ENCODE measurements at regions of chr2 and their contacts with region 1.

Region 1: GRCh38 chr2:191691016-191691735 is 13.2 kb downstream of the NABP1 start:
- DNase-seq: peak; percentile 87
- ATAC-seq: peak; percentile 30
- H3K4me3 ChIP-seq: no peak overlapping the region
- H3K27ac ChIP-seq: no peak overlapping the region
- H3K4me1 ChIP-seq: peaks cover 16% of the 10 kb centered on the region
- H3K27me3 ChIP-seq: no peaks in the 10 kb centered on the region
- CTCF ChIP-seq: peak; percentile 80
- POLR2A ChIP-seq: no peak
- RAD21 ChIP-seq: peak; percentile 79

Region 2: DNA sequence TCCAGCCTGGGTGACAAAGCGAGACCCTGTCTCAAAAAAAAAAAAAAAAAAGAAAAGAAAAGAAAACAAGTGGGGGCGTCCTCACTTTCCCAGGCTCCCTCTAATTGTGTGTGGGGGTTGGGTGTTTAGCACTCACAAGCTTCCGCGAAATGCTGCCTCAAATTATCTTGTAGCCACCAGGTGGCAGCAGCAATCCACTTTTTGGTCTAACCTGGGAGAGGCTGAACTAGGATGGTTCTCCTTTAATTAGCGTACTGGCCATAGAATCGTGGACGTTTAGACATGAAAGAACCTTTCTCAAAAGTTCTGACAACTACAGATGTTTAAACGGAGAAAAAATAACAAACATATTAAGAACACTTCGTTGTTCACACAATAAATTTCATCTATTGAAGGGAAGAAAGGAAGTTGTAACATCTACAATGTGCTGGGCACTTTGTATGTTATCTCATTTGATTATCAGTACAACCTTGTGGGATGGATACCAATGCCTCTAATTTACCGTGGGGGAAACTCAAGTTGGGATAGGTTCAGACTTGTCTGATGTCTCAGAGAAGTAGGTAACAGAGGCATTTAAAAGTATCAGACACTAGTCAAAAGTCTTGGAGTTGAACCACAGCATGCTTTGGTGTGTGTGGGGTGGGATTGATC is 136.0 kb before region 1 on chr2:
- CTCF ChIA-PET with region 1: no interaction called
- POLR2A ChIA-PET with region 1: interaction called, 16 read pairs
- dilution Hi-C with region 1: no loop called
- in situ Hi-C with region 1: no loop called
- intact Hi-C with region 1: no loop called
- DNase-seq: peak; percentile 74
- ATAC-seq: peak; percentile 93
- H3K4me3 ChIP-seq: no peak overlapping the region
- H3K27ac ChIP-seq: no peak overlapping the region
- H3K4me1 ChIP-seq: no peaks in the 10 kb centered on the region
- H3K27me3 ChIP-seq: peaks cover 3% of the 10 kb centered on the region; the same call in 1 of the 2 replicates
- CTCF ChIP-seq: peak; percentile 86
- POLR2A ChIP-seq: no peak
- RAD21 ChIP-seq: peak; percentile 90

Region 3: GRCh38 chr2:191625016-191625415 is 66.2 kb before region 1 on chr2:
- CTCF ChIA-PET with region 1: no interaction called
- POLR2A ChIA-PET with region 1: interaction called, 13 read pairs
- dilution Hi-C with region 1: no loop called
- in situ Hi-C with region 1: no loop called
- intact Hi-C with region 1: no loop called
- DNase-seq: no peak
- ATAC-seq: no peak
- H3K4me3 ChIP-seq: no peak overlapping the region
- H3K27ac ChIP-seq: no peak overlapping the region
- H3K4me1 ChIP-seq: peaks cover 12% of the 10 kb centered on the region
- H3K27me3 ChIP-seq: no peaks in the 10 kb centered on the region
- CTCF ChIP-seq: no peak
- POLR2A ChIP-seq: no peak
- RAD21 ChIP-seq: no peak

Region 4: GRCh38 chr2:191670076-191670475 is 21.1 kb before region 1 on chr2:
- CTCF ChIA-PET with region 1: no interaction called
- POLR2A ChIA-PET with region 1: no interaction called
- dilution Hi-C with region 1: no loop called
- in situ Hi-C with region 1: no loop called
- intact Hi-C with region 1: no loop called
- DNase-seq: no peak
- ATAC-seq: no peak
- H3K4me3 ChIP-seq: no peak overlapping the region
- H3K27ac ChIP-seq: no peak overlapping the region
- H3K4me1 ChIP-seq: peaks cover 2% of the 10 kb centered on the region; the same call in 1 of the 2 replicates
- H3K27me3 ChIP-seq: no peaks in the 10 kb centered on the region
- CTCF ChIP-seq: no peak
- POLR2A ChIP-seq: no peak
- RAD21 ChIP-seq: no peak

Region 5: DNA sequence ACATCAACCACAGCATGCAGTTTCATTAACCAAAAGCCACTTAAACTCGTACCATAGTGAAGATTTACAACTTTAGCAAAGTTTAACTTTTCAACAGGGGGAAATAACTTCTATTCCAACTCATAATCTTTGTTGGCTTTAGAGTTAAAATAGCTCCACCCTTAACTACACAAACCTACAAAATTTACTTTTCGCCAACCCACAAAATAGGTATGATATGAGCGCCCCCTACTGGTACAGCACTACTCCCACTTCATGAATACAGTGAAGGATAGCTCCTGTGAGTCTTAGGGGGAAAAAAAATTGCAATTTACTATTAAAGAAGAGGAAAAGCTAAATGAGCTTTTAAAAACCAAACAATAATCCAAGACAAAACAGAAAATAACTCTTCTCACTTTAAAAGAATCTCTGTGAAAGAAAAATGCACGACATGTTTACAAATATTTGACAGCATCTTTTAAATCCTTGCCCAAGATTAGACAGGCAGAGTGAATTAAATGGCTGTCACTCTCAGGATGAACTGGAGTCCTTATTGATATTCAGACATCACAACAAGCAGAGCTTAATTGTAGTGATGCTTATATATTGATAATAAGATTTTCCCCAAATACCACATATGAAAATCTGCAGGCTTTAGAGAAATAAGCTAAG is 471.3 kb after region 1 on chr2:
- CTCF ChIA-PET with region 1: interaction called, 3 read pairs
- POLR2A ChIA-PET with region 1: no interaction called
- dilution Hi-C with region 1: no loop called
- in situ Hi-C with region 1: no loop called
- intact Hi-C with region 1: loop called (anchors 5 kb)
- DNase-seq: peak; percentile 74
- ATAC-seq: peak; percentile 93
- H3K4me3 ChIP-seq: no peak overlapping the region
- H3K27ac ChIP-seq: no peak overlapping the region
- H3K4me1 ChIP-seq: no peaks in the 10 kb centered on the region
- H3K27me3 ChIP-seq: no peaks in the 10 kb centered on the region
- CTCF ChIP-seq: peak; percentile 92
- POLR2A ChIP-seq: no peak; the same call in 1 of the 2 replicates
- RAD21 ChIP-seq: peak; percentile 95

Region 6: DNA sequence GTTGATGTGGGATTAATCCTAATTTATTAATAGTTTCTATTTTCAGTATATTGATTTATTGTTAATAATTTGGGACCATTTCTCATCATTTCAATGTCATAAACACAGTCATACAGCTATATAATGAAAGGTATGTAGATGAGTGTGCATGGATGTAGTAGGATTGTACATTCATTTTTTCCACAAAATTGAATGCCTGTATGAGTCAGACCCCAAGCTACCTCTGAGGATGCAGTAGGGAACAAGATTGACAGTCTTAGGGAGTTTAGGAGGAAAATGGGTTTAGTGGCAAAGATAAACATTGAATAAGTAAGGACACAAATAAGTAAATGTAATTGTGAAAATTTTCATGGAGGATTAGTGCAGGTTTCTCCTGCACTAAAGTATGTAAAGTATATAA is 517.7 kb after region 1 on chr2:
- CTCF ChIA-PET with region 1: no interaction called
- POLR2A ChIA-PET with region 1: interaction called, 13 read pairs
- dilution Hi-C with region 1: no loop called
- in situ Hi-C with region 1: no loop called
- intact Hi-C with region 1: no loop called
- DNase-seq: peak; percentile 33
- ATAC-seq: no peak
- H3K4me3 ChIP-seq: no peak overlapping the region
- H3K27ac ChIP-seq: no peak overlapping the region
- H3K4me1 ChIP-seq: no peaks in the 10 kb centered on the region
- H3K27me3 ChIP-seq: no peaks in the 10 kb centered on the region
- CTCF ChIP-seq: no peak
- POLR2A ChIP-seq: no peak
- RAD21 ChIP-seq: no peak